ENCODE measurements at regions of chr3 and their contacts with region 1.

Region 1: DNA sequence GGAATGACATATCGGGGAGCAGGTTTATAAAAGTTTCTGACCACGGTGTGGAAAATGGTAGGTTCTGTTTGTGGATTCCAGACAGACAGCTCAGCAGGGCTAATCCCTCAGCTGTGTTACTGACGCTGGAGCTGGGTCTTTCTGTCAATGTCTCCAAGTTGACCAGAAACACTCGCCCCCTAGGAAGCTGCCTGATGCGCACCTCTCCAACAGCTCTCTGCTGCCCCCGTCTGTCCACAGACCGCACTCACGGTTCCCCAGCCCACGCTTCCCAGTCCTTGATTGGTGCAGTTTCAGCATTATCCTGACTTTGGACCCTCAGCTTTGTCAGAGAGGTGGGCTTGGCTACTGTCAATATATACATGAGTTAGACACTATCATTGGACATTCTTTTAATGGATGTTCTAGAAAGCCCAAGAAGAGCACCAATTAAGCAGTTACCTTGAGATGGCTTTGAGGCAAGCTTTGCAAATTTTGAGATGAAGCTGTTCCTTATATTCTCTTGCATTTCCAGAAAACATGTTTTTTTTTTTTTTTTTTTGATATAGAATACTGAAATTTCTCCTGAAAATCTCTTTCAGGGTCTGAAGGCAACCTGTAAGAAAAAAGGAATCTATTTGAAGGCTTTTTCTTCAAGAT is 98.9 kb upstream of the TBC1D5 start:
- DNase-seq: peak; percentile 80
- ATAC-seq: peak; percentile 89
- H3K4me3 Mint-ChIP-seq: no peak overlapping the region
- H3K27ac Mint-ChIP-seq: no peak overlapping the region
- H3K4me1 Mint-ChIP-seq: no peaks in the 10 kb centered on the region
- H3K27me3 Mint-ChIP-seq: peaks cover 12% of the 10 kb centered on the region

Region 2: GRCh38 chr3:17412950-17413530 is 428.3 kb before region 1 on chr3:
- CTCF ChIA-PET with region 1: interaction called, 10 read pairs
- DNase-seq: no peak
- ATAC-seq: peak; percentile 67
- H3K4me3 Mint-ChIP-seq: no peak overlapping the region
- H3K27ac Mint-ChIP-seq: no peak overlapping the region
- H3K4me1 Mint-ChIP-seq: no peaks in the 10 kb centered on the region
- H3K27me3 Mint-ChIP-seq: no peaks in the 10 kb centered on the region

Region 3: DNA sequence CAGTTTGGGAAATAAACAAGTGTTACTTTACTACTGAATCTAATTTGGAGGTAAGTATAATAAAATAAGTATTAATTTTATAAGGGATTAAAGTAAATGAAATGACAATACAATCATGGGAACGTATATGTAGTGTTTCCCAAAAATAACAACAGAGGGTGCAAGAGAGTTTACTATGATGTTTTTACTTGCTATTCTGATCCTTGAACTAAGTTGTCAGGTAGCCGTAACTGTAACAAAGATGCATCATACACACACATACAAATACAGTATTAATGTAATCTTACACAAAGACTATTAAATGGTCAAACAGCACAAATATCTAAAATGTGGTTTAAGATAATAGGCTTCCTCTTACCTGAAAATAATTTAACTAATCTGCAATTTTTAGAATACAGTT is 410.3 kb before region 1 on chr3:
- CTCF ChIA-PET with region 1: interaction called, 25 read pairs
- DNase-seq: no peak
- ATAC-seq: no peak
- H3K4me3 Mint-ChIP-seq: no peak overlapping the region
- H3K27ac Mint-ChIP-seq: no peak overlapping the region
- H3K4me1 Mint-ChIP-seq: no peaks in the 10 kb centered on the region
- H3K27me3 Mint-ChIP-seq: no peaks in the 10 kb centered on the region

Region 4: DNA sequence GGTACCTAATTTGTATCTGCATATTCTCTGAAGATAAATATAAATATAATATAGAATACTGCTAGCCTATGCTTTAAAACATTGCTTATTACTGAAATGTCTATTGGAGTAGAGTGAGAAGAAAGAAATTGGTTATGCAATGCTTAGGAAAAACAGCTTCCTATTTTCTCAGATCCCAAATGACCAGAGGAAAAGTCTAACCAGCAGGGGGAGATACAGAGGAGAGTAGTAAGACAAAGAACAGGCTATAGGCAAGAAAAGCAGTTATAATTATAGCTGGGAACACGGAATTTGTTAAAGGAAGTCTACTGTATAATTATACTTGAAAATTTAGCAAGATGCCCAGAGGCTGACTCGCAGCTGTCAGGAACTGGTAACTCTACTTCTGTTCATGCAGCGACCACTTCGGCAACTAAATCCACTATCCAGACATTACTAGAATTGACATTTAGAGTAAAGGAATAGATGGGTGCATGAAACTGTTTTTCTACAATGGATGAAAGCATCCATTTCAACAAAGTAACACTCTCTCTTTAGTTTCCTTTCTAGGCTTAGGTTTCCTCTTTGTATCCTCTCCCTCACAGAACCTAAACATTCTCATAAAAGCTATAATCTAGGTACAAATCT is 196.1 kb before region 1 on chr3:
- CTCF ChIA-PET with region 1: interaction called, 27 read pairs
- DNase-seq: no peak
- ATAC-seq: no peak
- H3K4me3 Mint-ChIP-seq: no peak overlapping the region
- H3K27ac Mint-ChIP-seq: no peak overlapping the region
- H3K4me1 Mint-ChIP-seq: peaks cover 2% of the 10 kb centered on the region
- H3K27me3 Mint-ChIP-seq: no peaks in the 10 kb centered on the region

Region 5: GRCh38 chr3:18134386-18135062 is 293.2 kb after region 1 on chr3:
- CTCF ChIA-PET with region 1: no interaction called
- DNase-seq: no peak
- ATAC-seq: no peak
- H3K4me3 Mint-ChIP-seq: no peak overlapping the region
- H3K27ac Mint-ChIP-seq: no peak overlapping the region
- H3K4me1 Mint-ChIP-seq: no peaks in the 10 kb centered on the region
- H3K27me3 Mint-ChIP-seq: no peaks in the 10 kb centered on the region